ENCODE measurements at regions of chr17 and their contacts with region 1.

Region 1: DNA sequence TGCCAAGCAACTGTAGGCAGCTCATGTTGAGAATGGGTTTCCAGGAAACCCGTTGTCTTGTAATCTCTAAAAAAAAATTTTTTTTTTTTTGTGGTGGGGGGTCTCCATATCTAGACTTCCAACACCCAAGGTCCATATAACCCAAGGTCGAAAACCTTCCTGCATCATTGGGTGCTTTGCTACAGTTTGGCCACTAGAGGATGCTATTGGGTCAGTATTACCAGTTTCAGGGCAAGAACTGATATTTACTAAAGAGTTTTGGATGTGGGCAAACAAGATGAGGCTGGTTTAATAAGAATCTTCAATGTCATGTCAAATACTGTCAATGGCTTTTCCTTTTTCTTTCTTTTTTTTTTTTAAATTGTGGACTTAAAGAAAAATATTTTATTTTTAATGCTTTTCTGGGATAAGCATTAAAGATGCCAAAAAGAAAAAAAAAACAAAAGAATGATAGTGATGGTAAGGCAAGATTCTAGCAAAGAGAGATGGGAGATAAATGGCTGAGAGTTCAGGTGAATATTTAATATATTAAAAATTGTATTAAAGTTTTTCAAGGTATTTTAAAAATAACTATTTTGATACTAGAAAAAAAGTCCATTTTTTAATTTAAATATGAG is 62.2 kb downstream of the DHRS7C start:
- DNase-seq: peak; percentile 29 to 47
- H3K4me3 ChIP-seq: no peak overlapping the region
- H3K27ac ChIP-seq: no peak overlapping the region
- H3K4me1 ChIP-seq: peaks cover 6% of the 10 kb centered on the region
- H3K27me3 ChIP-seq: no peaks in the 10 kb centered on the region
- CTCF ChIP-seq: peak; percentile 95

Region 2: GRCh38 chr17:9575381-9576101 is 153.6 kb before region 1 on chr17 and contains the start of gene STX8:
- CTCF ChIA-PET with region 1: interaction called, 3 read pairs
- POLR2A ChIA-PET with region 1: no interaction called
- intact Hi-C with region 1: loop called (anchors 1 kb)
- DNase-seq: peak; percentile 57 to 88
- H3K4me3 ChIP-seq: peak within 1 kb of the TSS; percentile 82
- H3K27ac ChIP-seq: no peak within 1 kb of the TSS
- H3K4me1 ChIP-seq: no peaks in the 10 kb centered on the region
- H3K27me3 ChIP-seq: no peaks in the 10 kb centered on the region
- CTCF ChIP-seq: no peak
- total RNA-seq, gene STX8: 49.2 and 60.6 TPM in 2 replicates

Region 3: DNA sequence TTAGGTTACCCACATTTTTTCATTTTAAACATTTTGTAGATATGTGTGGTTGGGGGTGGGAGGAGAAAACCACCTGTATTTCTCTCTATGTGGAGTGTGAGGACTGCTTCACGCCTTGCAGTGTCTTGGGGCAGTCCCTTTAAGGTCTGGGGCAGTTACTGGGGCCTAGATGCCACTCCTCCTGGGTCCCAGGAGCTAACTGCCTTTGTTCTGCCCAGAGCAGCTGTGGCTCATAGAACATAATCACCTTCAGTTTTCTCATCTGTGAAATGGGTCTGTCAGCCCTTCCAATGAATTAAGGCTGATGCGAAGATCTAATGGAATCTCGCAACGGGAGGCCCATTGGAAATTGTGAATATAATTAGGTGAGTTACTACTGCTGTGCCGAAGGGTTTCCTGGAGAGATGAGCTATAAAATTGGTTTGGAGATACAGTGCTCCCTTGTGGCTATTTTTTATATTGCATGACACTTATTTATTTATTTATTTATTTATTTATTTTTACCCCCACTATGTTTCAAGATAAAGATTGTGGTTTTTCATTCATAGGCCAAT is 39.3 kb after region 1 on chr17:
- CTCF ChIA-PET with region 1: interaction called, 3 read pairs
- POLR2A ChIA-PET with region 1: interaction called, 12 read pairs
- intact Hi-C with region 1: no loop called
- DNase-seq: peak in 1 of 2 experiments; percentile 5
- H3K4me3 ChIP-seq: no peak overlapping the region
- H3K27ac ChIP-seq: no peak overlapping the region
- H3K4me1 ChIP-seq: no peaks in the 10 kb centered on the region; the same call in 1 of the 2 replicates
- H3K27me3 ChIP-seq: no peaks in the 10 kb centered on the region
- CTCF ChIP-seq: peak; percentile 67

Region 4: GRCh38 chr17:9948928-9949327 is 219.8 kb after region 1 on chr17:
- CTCF ChIA-PET with region 1: interaction called, 14 read pairs
- POLR2A ChIA-PET with region 1: no interaction called
- intact Hi-C with region 1: no loop called
- DNase-seq: no peak
- H3K4me3 ChIP-seq: no peak overlapping the region
- H3K27ac ChIP-seq: no peak overlapping the region
- H3K4me1 ChIP-seq: no peaks in the 10 kb centered on the region
- H3K27me3 ChIP-seq: peaks cover 84% of the 10 kb centered on the region
- CTCF ChIP-seq: no peak

Region 5: GRCh38 chr17:9982159-9982558 is 253.0 kb after region 1 on chr17:
- CTCF ChIA-PET with region 1: no interaction called
- POLR2A ChIA-PET with region 1: no interaction called
- intact Hi-C with region 1: loop called (anchors 1 kb)
- DNase-seq: peak in 1 of 2 experiments; percentile 25
- H3K4me3 ChIP-seq: no peak overlapping the region
- H3K27ac ChIP-seq: no peak overlapping the region
- H3K4me1 ChIP-seq: no peaks in the 10 kb centered on the region
- H3K27me3 ChIP-seq: peaks cover 57% of the 10 kb centered on the region
- CTCF ChIP-seq: peak; percentile 54

Region 6: GRCh38 chr17:10618202-10618635 is 889.1 kb after region 1 on chr17:
- CTCF ChIA-PET with region 1: no interaction called
- POLR2A ChIA-PET with region 1: no interaction called
- intact Hi-C with region 1: loop called (anchors 10 kb)
- DNase-seq: peak; percentile 55 to 60
- H3K4me3 ChIP-seq: no peak overlapping the region
- H3K27ac ChIP-seq: no peak overlapping the region
- H3K4me1 ChIP-seq: no peaks in the 10 kb centered on the region
- H3K27me3 ChIP-seq: peaks cover 20% of the 10 kb centered on the region
- CTCF ChIP-seq: peak; percentile 78